ENCODE measurements at regions of chr9 and their contacts with region 1.

Region 1: GRCh38 chr9:113657703-113658544 is 194.4 kb downstream of the RGS3 start:
- DNase-seq: peak; percentile 88 to 92 (median 91)
- H3K4me3 ChIP-seq: no peak overlapping the region
- H3K27ac ChIP-seq: no peak overlapping the region
- H3K4me1 ChIP-seq: peaks cover 0 to 18% (median 6%) of the 10 kb centered on the region in 3 donors
- H3K27me3 ChIP-seq: no peaks in the 10 kb centered on the region
- CTCF ChIP-seq: peak; percentile 94

Region 2: GRCh38 chr9:113331780-113332179 is 326.1 kb before region 1 on chr9:
- intact Hi-C with region 1: no loop called
- DNase-seq: no peak
- H3K4me3 ChIP-seq: no peak overlapping the region
- H3K27ac ChIP-seq: no peak overlapping the region
- H3K4me1 ChIP-seq: no peaks in the 10 kb centered on the region
- H3K27me3 ChIP-seq: no peaks in the 10 kb centered on the region
- CTCF ChIP-seq: no peak

Region 3: GRCh38 chr9:113361304-113362018 is 296.5 kb before region 1 on chr9:
- intact Hi-C with region 1: no loop called
- DNase-seq: no peak
- H3K4me3 ChIP-seq: no peak overlapping the region
- H3K27ac ChIP-seq: no peak overlapping the region
- H3K4me1 ChIP-seq: peaks cover 0 to 6% (median 2%) of the 10 kb centered on the region in 3 donors
- H3K27me3 ChIP-seq: no peaks in the 10 kb centered on the region
- CTCF ChIP-seq: no peak

Region 4: DNA sequence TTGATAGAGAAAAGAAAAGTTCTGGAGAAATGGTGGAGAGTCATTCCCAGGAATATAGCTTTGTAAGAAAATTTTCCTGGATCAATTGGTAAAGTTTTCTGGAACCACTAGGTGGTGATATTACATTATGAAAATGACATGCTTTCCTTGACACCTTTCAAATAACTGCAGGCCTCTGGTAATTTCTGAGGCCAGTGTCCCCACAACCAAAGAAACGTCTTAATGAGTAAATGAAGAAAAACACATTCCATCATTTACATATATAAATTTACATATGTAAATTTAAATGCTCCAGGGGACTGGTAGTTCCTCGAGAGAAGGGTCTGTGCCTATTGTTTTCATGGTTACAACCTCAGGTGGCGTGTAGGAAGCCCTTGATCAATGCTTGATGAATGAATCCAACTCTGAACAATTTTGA is 211.6 kb before region 1 on chr9:
- intact Hi-C with region 1: loop called (anchors 2 kb)
- DNase-seq: peak in 2 of 5 donors; percentile 62 to 74
- H3K4me3 ChIP-seq: no peak overlapping the region
- H3K27ac ChIP-seq: no peak overlapping the region
- H3K4me1 ChIP-seq: no peaks in the 10 kb centered on the region
- H3K27me3 ChIP-seq: no peaks in the 10 kb centered on the region
- CTCF ChIP-seq: peak; percentile 74

Region 5: DNA sequence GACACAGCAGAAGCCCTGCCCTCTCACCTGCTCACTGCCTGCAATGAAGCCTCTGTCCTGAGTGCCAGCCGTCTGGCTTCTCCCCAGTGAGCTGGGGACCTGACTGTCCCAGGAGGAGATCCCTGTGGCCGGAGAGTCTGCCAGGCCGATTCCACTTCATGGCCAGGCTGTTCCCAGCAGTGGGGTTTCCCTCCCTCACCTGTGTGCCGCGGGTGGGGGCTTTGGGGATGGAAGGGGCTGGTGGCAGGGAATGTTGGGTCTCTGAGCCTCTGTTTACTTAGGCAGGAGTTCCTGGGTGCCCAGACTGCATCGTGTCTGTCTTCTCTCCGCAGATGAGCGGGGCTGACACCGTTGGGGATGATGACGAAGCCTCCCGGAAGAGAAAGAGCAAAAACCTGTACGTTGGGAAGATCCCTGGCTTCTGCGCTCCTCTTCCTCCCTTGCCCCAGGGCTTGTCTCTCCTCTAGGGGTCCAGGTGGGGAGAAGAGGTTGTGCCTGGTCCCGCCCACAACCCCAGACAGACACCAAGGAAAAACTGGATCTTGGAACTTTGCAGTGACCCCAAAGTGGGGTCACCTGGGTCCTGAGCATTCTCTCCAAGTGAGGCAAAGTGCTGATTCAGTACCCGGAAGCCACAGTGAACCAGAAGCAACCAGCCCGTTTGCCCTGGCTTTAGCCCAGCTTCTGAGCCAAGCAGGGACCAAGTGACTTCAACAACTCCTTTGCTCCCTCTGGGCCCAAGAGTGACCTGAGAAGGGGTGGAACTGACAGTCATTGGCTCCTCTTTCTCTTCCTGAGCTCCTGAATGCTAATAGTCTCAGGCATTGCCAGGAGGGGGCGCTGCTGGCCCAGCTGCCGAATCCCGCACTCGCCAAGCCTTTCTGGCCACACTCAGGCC is 66.7 kb before region 1 on chr9:
- intact Hi-C with region 1: loop called (anchors 5 kb)
- DNase-seq: peak; percentile 86 to 92 (median 89)
- H3K4me3 ChIP-seq: no peak overlapping the region
- H3K27ac ChIP-seq: peak overlapping the region; percentile 61 to 75
- H3K4me1 ChIP-seq: peaks cover 0 to 45% (median 38%) of the 10 kb centered on the region in 3 donors
- H3K27me3 ChIP-seq: no peaks in the 10 kb centered on the region
- CTCF ChIP-seq: peak; percentile 97

Measured in kidney (tissue), 22 donors.